PC-3 (cell line): ENCODE measurements at regions of chr7 and their contacts with region 1.

Region 1: GRCh38 chr7:13990984-13991790 is 1.7 kb upstream of the ETV1 start:
- DNase-seq: peak; percentile 98
- ATAC-seq: peak; percentile 74
- H3K4me3 ChIP-seq: peak overlapping the region; percentile 77
- H3K27ac ChIP-seq: peak overlapping the region; percentile 82
- H3K4me1 ChIP-seq: peaks cover 26% of the 10 kb centered on the region
- H3K27me3 ChIP-seq: no peaks in the 10 kb centered on the region
- CTCF ChIP-seq: no peak

Region 2: DNA sequence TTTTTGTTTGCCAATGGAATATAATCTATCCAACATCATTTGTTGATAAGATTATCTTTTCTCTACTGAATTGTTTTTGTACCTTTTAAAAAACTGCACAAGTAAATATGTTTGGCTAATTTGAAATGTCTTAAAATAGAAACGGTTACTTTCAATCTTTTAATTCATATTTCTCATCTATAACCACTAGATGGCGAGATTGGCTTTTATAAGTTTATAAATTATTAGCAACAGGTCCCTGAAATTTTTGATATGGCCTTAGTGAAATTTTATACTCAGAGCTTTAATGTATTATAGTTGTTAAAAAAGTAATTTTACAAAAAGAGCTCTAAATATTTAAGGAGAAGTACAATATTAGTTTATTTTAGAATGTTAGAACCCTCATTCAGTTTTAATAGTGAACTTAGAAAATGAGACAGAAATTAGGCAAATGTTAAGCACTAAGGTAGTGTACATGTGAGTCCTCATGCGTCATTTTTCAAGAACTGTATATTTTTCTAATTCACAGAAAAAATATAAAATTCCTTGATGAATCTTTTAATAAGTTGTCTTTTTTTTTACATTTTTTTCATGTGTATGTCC is 711.2 kb before region 1 on chr7:
- CTCF ChIA-PET with region 1: interaction called, 5 read pairs
- POLR2A ChIA-PET with region 1: no interaction called
- intact Hi-C with region 1: loop called (anchors 2 kb)
- DNase-seq: peak; percentile 63
- ATAC-seq: no peak; the same call in 1 of the 2 replicates
- H3K4me3 ChIP-seq: no peak overlapping the region
- H3K27ac ChIP-seq: no peak overlapping the region
- H3K4me1 ChIP-seq: no peaks in the 10 kb centered on the region
- H3K27me3 ChIP-seq: no peaks in the 10 kb centered on the region
- CTCF ChIP-seq: peak; percentile 69

Region 3: DNA sequence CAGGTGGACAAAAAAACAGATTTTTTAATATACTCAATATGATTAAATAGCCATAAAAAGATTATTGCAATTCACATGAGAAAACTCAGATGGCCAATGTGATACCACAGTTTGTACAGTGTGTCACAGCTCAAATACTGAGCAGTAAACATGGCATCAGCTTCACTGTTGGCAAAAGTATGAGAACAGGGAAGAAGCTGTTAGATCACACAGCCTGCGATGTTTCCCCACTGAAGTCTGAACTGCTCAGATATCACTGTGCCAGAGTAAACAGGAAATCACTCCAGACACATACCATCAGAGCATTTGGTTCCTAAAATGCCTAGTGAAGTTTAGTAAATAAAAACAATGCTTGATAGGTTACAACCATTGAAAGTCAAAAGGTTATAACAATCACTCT is 349.5 kb before region 1 on chr7:
- CTCF ChIA-PET with region 1: no interaction called
- POLR2A ChIA-PET with region 1: no interaction called
- intact Hi-C with region 1: loop called (anchors 10 kb)
- DNase-seq: peak; percentile 85
- ATAC-seq: peak; percentile 100
- H3K4me3 ChIP-seq: no peak overlapping the region
- H3K27ac ChIP-seq: peak overlapping the region; percentile 77
- H3K4me1 ChIP-seq: peaks cover 20% of the 10 kb centered on the region
- H3K27me3 ChIP-seq: no peaks in the 10 kb centered on the region
- CTCF ChIP-seq: no peak

Region 4: DNA sequence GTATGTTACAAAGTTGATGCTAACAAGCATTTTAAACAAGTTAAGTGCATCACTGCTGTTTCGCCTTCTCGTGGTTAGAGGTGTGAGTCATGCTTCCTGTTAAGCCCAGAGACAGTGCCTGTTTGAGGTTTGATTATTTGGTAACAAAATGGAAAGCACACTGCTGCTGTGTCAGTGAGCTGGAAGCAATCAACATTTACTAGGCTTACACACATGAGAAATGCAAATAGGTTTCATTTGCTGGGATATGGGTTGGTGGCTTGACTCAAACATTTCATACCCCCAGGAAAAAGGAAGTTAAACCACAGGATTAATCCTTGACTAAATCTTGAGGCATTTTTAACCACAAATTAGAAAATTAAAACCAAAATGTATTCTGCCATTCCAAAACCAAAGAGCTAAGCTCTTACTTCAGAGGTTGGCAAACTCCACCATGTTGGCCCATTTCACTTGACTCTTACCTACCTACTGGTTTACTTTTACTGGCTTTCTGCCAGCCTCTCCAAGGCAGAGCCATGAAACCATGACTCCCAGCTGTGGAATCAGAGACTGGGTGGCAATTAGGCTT is 140.9 kb before region 1 on chr7:
- CTCF ChIA-PET with region 1: no interaction called
- POLR2A ChIA-PET with region 1: interaction called, 4 read pairs
- intact Hi-C with region 1: loop called (anchors 2 kb)
- DNase-seq: peak; percentile 97
- ATAC-seq: peak; percentile 90
- H3K4me3 ChIP-seq: no peak overlapping the region
- H3K27ac ChIP-seq: peak overlapping the region; percentile 95
- H3K4me1 ChIP-seq: peaks cover 49% of the 10 kb centered on the region
- H3K27me3 ChIP-seq: no peaks in the 10 kb centered on the region
- CTCF ChIP-seq: no peak

Region 5: GRCh38 chr7:14095233-14095950 is 104.2 kb after region 1 on chr7:
- CTCF ChIA-PET with region 1: interaction called, 4 read pairs
- POLR2A ChIA-PET with region 1: interaction called, 6 read pairs
- intact Hi-C with region 1: loop called (anchors 1 kb)
- DNase-seq: peak; percentile 89
- ATAC-seq: peak; percentile 100
- H3K4me3 ChIP-seq: peak overlapping the region; percentile 35
- H3K27ac ChIP-seq: peak overlapping the region; percentile 81
- H3K4me1 ChIP-seq: peaks cover 13% of the 10 kb centered on the region
- H3K27me3 ChIP-seq: no peaks in the 10 kb centered on the region
- CTCF ChIP-seq: no peak

Region 6: GRCh38 chr7:14294637-14295036 is 303.4 kb after region 1 on chr7:
- CTCF ChIA-PET with region 1: no interaction called
- POLR2A ChIA-PET with region 1: no interaction called
- intact Hi-C with region 1: loop called (anchors 2 kb)
- DNase-seq: peak; percentile 37
- ATAC-seq: peak; percentile 85
- H3K4me3 ChIP-seq: no peak overlapping the region
- H3K27ac ChIP-seq: no peak overlapping the region
- H3K4me1 ChIP-seq: peaks cover 8% of the 10 kb centered on the region
- H3K27me3 ChIP-seq: no peaks in the 10 kb centered on the region
- CTCF ChIP-seq: no peak